ENCODE measurements at regions of chr22 and their contacts with region 1.

Region 1: GRCh38 chr22:48531761-48532435 is 1295.8 kb downstream of the BRD1 start:
- DNase-seq: no peak
- H3K4me3 ChIP-seq: no peak overlapping the region
- H3K27ac ChIP-seq: no peak overlapping the region
- H3K4me1 ChIP-seq: peaks cover 1% of the 10 kb centered on the region
- H3K27me3 ChIP-seq: no peaks in the 10 kb centered on the region
- CTCF ChIP-seq: no peak
- EP300 ChIP-seq: no peak
- POLR2A ChIP-seq: no peak

Region 2: DNA sequence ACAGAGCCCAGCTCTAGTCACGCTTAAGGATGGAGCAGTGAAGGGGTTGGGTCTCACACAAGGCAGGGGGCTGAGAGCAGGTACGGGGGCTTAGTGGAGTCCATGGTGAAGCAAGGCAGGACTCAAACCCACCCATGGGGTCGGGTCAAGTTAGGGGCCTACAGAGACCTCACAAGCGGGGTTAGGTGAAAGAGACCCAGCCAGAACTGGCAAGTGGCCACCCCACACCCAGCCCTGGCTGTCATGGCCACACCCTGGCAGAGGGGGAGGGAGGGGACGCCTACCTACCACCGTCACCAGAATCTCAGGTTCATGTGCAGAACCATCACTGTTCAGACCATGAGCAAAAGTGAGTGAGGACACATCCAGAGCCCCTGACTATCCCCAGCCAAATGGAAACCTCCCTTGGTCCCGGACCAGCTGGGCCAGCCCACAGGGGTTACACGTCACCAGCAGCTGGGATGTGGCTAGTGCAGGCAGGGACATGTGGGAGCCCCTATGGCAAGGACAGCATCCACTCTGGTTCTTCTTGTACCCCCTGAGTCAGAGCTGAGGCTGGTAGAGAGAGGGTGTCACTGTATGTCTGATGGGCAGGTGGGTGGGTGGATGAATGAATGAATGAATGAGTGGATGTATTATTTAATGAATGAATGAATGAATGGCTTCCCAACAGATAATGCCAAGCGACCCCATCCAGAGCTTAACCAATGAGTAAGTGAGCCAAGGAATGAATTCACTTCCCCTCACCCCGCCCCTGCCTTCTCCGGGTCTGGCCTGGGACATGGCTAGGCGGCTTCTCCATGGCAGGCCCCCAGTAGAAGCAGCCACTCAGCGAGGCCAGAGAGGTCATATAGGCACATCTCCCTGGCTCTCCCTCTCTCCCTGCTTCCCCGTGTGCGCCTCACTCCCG is 1087.8 kb before region 1 on chr22:
- intact Hi-C with region 1: loop called in 1 of 4 experiments (anchors 5 kb)
- DNase-seq: no peak
- H3K4me3 ChIP-seq: no peak overlapping the region
- H3K27ac ChIP-seq: no peak overlapping the region
- H3K4me1 ChIP-seq: no peaks in the 10 kb centered on the region
- H3K27me3 ChIP-seq: no peaks in the 10 kb centered on the region
- CTCF ChIP-seq: no peak
- EP300 ChIP-seq: no peak
- POLR2A ChIP-seq: no peak

Region 3: GRCh38 chr22:48315439-48316259 is 216.2 kb before region 1 on chr22:
- intact Hi-C with region 1: no loop called
- DNase-seq: peak in 3 of 5 donors; percentile 19 to 28 (median 21)
- H3K4me3 ChIP-seq: no peak overlapping the region
- H3K27ac ChIP-seq: no peak overlapping the region
- H3K4me1 ChIP-seq: peaks cover 1% of the 10 kb centered on the region
- H3K27me3 ChIP-seq: no peaks in the 10 kb centered on the region
- CTCF ChIP-seq: no peak
- EP300 ChIP-seq: no peak
- POLR2A ChIP-seq: no peak

Region 4: GRCh38 chr22:48719978-48720661 is 188.2 kb after region 1 on chr22:
- intact Hi-C with region 1: no loop called
- DNase-seq: no peak
- H3K4me3 ChIP-seq: no peak overlapping the region
- H3K27ac ChIP-seq: no peak overlapping the region
- H3K4me1 ChIP-seq: no peaks in the 10 kb centered on the region
- H3K27me3 ChIP-seq: no peaks in the 10 kb centered on the region
- CTCF ChIP-seq: no peak
- EP300 ChIP-seq: no peak
- POLR2A ChIP-seq: no peak